ENCODE measurements at regions of chr17 and their contacts with region 1.

Region 1: DNA sequence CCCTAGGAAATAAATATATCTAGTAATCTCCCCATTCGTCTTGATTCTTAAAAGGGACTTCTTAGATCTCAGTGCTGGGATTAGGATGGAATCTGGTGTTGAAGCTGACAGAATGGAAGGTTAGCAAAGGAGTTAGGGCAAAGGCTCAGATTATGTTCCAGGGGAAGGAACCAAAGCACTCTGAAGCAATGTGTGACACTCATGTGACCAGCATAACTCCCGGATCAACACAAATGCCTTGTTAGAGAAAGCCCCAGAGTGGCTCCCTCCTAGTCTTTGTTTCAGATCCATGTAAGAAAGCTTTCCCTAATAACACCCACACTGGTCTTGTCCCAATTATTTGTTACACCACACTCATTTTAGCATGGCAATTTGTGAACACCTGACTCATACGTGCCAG is 62.6 kb upstream of the ERN1 start:
- DNase-seq: no peak
- CTCF ChIP-seq: no peak

Region 2: GRCh38 chr17:64005734-64006167 is 186.8 kb before region 1 on chr17:
- CTCF ChIA-PET with region 1: no interaction called
- POLR2A ChIA-PET with region 1: no interaction called
- DNase-seq: no peak
- CTCF ChIP-seq: no peak

Region 3: GRCh38 chr17:64148714-64149178 is 43.8 kb before region 1 on chr17:
- CTCF ChIA-PET with region 1: no interaction called
- POLR2A ChIA-PET with region 1: no interaction called
- DNase-seq: no peak
- CTCF ChIP-seq: no peak

Region 4: GRCh38 chr17:64180089-64181073 is 12.2 kb before region 1 on chr17:
- CTCF ChIA-PET with region 1: interaction called, 15 read pairs
- POLR2A ChIA-PET with region 1: no interaction called
- DNase-seq: no peak
- CTCF ChIP-seq: no peak

Region 5: DNA sequence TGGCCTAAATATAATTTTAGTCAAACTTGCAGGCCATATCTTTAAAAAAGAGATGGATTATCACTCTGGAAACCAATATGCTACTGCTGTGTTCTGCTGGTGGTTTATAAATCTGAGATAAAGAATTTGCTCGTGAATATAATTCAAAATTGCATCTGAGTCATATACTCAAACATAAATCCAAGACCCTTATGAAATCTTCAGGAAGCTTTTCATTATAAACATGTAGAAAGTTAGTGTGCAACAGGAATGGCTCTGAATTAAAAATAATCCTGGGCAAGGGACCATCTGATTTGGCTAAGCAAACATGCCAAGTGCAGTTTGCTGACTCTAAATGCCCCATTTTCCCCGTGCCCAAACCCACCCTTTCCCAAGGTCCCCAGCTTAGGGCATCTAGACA is 13.2 kb after region 1 on chr17:
- CTCF ChIA-PET with region 1: interaction called, 11 read pairs
- POLR2A ChIA-PET with region 1: no interaction called
- DNase-seq: no peak
- CTCF ChIP-seq: no peak

Measured in GM10248 (cell line).